CD8-positive, alpha-beta T cell (primary cell): ENCODE measurements at regions of chr6 and their contacts with region 1.

Region 1: GRCh38 chr6:144095331-144096002 is at the start of gene SF3B5:
- DNase-seq: peak; percentile 94 to 100 (median 97)
- ATAC-seq: peak; percentile 96
- H3K4me3 ChIP-seq: peak within 1 kb of the TSS; percentile 79 to 91
- H3K4me3 Mint-ChIP-seq: peak within 1 kb of the TSS; percentile 97
- H3K27ac ChIP-seq: peak within 1 kb of the TSS; percentile 91 to 94
- H3K27ac Mint-ChIP-seq: peak within 1 kb of the TSS; percentile 98
- H3K4me1 ChIP-seq: peaks cover 18% of the 10 kb centered on the region
- H3K4me1 Mint-ChIP-seq: peaks cover 25% of the 10 kb centered on the region
- H3K27me3 ChIP-seq: no peaks in the 10 kb centered on the region
- H3K27me3 Mint-ChIP-seq: no peaks in the 10 kb centered on the region
- CTCF ChIP-seq: no peak
- total RNA-seq, gene SF3B5: 167 to 171 TPM

Region 2: GRCh38 chr6:142155895-142156757 is 1939.3 kb before region 1 on chr6:
- CTCF ChIA-PET with region 1: no interaction called
- POLR2A ChIA-PET with region 1: no interaction called
- intact Hi-C with region 1: loop called in 1 of 2 experiments (anchors 10 kb)
- DNase-seq: peak in 2 of 9 experiments; percentile 19 to 44
- ATAC-seq: peak; percentile 76
- H3K4me3 ChIP-seq: no peak overlapping the region
- H3K4me3 Mint-ChIP-seq: no peak overlapping the region
- H3K27ac ChIP-seq: no peak overlapping the region
- H3K27ac Mint-ChIP-seq: peak overlapping the region; percentile 39
- H3K4me1 ChIP-seq: peaks cover 8% of the 10 kb centered on the region
- H3K4me1 Mint-ChIP-seq: peaks cover 69% of the 10 kb centered on the region
- H3K27me3 ChIP-seq: no peaks in the 10 kb centered on the region
- H3K27me3 Mint-ChIP-seq: no peaks in the 10 kb centered on the region
- CTCF ChIP-seq: peak; percentile 83

Region 3: DNA sequence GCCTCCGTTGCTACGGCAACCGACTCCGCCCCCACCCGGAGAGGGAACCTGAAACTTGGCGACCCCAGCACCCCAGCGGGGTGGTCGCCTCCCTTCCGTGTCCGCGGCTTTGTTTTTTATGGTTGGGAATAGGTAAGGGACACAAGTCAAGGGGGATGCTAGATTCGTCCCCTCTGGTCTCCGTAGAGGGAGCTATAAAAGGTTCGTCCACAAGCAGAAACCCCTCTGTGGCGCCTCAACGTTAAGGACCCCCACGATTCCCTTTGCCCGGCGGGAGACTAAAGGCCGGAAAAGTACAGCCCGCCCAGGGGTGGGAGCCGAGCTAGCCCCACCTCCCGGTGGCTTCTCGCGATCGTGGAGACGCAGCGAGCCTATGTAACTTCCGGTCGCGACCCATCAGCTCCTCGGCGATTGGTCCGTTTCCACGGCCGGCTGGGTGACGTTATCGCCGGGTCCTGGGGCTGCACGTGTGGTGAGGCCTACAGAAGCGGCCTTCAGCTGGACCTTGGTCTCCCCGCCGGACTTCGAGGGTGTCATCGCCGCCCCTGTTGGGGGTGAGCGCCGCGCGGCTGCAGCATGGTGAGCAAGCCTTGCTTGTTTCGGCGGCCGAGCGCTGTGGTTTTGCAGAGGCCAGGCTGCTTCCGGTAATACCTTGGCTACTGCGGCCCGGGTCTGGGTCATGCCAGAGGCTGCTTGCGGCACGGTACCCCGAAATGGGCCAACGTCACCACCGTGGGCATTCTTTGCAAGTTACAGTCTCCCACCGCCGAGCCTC is 252.4 kb before region 1 on chr6 and contains the start of gene LTV1:
- CTCF ChIA-PET with region 1: no interaction called
- POLR2A ChIA-PET with region 1: interaction called, 4 read pairs
- intact Hi-C with region 1: loop called (anchors 1 to 2 kb)
- DNase-seq: peak; percentile 82 to 96 (median 91)
- ATAC-seq: peak; percentile 96
- H3K4me3 ChIP-seq: peak within 1 kb of the TSS; percentile 96 to 99
- H3K4me3 Mint-ChIP-seq: peak within 1 kb of the TSS; percentile 96
- H3K27ac ChIP-seq: peak within 1 kb of the TSS; percentile 94 to 95
- H3K27ac Mint-ChIP-seq: peak within 1 kb of the TSS; percentile 98
- H3K4me1 ChIP-seq: peaks cover 6% of the 10 kb centered on the region
- H3K4me1 Mint-ChIP-seq: peaks cover 28% of the 10 kb centered on the region
- H3K27me3 ChIP-seq: no peaks in the 10 kb centered on the region
- H3K27me3 Mint-ChIP-seq: no peaks in the 10 kb centered on the region
- CTCF ChIP-seq: no peak
- total RNA-seq, gene LTV1: 31.7 to 33.4 TPM

Region 4: DNA sequence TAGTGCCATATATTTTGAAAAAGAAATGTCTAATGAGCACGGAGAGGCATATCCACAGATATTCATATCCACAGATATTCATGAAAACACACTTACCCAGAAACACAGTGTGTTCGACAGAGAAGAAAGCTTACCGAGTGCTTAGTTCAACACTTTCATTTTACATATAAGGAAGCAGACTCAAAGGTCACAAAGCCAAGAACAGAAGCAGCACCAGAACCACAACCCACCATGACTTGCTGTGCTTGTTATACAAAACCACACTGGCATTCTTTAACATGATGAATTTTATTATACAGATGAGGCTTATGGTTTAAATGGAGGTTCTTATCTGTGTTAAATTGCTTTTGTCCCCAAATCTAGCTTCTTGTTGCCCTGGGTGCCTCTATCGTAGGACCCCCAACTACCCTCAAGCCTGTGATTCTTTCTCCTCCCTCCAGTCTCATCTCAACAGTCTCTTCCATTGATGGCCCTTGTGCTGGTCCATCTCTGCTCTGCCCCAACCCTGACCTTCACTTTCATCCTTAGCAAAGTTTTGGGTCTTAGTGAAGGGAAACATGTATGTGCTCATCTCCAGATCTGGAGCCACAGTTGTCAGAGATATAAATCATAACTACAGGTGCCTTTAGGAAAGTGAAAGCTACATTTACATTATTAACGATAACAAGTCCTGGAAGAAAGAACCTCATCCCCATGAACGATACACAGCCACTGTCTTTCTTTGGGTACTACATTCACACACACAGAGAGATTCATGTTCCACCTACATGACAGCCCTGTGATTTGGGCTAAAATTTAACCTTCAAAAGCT is 40.1 kb before region 1 on chr6:
- CTCF ChIA-PET with region 1: interaction called, 3 read pairs
- POLR2A ChIA-PET with region 1: interaction called, 23 read pairs
- intact Hi-C with region 1: loop called in 1 of 2 experiments (anchors 2 kb)
- DNase-seq: peak in 6 of 9 experiments; percentile 30 to 84 (median 60)
- ATAC-seq: peak; percentile 98
- H3K4me3 ChIP-seq: peak overlapping the region; percentile 32 to 38
- H3K4me3 Mint-ChIP-seq: peak overlapping the region; percentile 82
- H3K27ac ChIP-seq: peak overlapping the region; percentile 32 to 80
- H3K27ac Mint-ChIP-seq: peak overlapping the region; percentile 94
- H3K4me1 ChIP-seq: peaks cover 20% of the 10 kb centered on the region
- H3K4me1 Mint-ChIP-seq: peaks cover 31% of the 10 kb centered on the region
- H3K27me3 ChIP-seq: no peaks in the 10 kb centered on the region
- H3K27me3 Mint-ChIP-seq: no peaks in the 10 kb centered on the region
- CTCF ChIP-seq: no peak

Region 5: DNA sequence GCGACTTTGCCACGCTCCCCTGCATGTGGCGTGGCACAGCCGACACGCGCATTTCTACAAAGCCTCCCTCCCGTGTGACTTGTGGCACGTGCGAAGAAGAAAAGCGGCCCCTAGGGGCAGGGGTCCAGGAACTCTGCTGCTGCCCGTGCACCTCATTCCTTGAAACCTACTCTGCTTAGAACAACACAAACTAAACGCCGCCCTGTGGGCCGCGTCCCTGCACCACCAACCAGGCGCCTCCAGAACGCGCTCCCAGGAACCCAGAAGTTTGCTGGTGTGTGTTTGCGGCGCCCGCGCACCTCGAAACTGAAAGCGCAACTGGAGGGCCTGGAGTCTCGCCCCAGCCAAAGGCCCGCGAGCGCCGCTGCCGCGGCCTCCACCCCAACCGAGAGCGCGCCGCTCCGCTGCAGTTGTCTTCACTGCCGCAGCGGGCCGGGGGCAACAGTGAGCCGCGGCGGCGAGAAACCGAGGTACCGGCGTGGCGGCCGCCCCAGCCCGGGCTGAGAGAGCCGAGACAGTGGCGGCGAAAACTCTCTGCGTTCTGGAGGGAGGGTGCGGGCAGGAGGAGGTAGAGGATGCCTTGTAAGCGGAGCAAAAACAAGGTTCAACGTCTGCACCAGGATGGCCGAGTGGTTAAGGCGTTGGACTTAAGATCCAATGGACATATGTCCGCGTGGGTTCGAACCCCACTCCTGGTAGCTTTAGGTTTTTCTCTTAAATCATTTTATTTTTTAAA is 120.6 kb after region 1 on chr6:
- CTCF ChIA-PET with region 1: interaction called, 22 read pairs
- POLR2A ChIA-PET with region 1: interaction called, 4 read pairs
- intact Hi-C with region 1: loop called (anchors 1 to 2 kb)
- DNase-seq: peak; percentile 85 to 97 (median 92)
- ATAC-seq: peak; percentile 85
- H3K4me3 ChIP-seq: peak overlapping the region; percentile 70 to 71
- H3K4me3 Mint-ChIP-seq: peak overlapping the region; percentile 95
- H3K27ac ChIP-seq: peak overlapping the region; percentile 82 to 86
- H3K27ac Mint-ChIP-seq: peak overlapping the region; percentile 100
- H3K4me1 ChIP-seq: peaks cover 27% of the 10 kb centered on the region
- H3K4me1 Mint-ChIP-seq: peaks cover 36% of the 10 kb centered on the region
- H3K27me3 ChIP-seq: no peaks in the 10 kb centered on the region
- H3K27me3 Mint-ChIP-seq: peaks cover 2% of the 10 kb centered on the region
- CTCF ChIP-seq: peak; percentile 64

Region 6: DNA sequence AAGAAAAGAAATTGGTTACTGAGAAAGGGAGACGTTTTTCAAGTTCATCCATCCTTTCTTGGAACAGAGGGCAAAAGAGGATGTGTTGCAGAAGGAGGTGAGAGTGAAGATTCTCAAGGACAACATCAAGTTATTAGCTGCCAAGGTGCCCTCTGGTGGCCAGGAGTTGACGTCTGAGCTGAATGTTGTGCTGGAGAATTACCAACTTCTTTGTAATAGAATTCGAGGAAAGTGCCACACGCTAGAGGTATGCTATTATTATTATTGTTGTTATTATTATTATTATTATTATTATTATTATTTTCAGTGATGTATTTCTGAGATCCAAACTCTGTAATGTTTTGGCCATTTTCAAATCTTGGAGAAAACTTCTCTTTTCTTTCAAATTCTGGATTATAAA is 386.7 kb after region 1 on chr6:
- CTCF ChIA-PET with region 1: interaction called, 10 read pairs
- POLR2A ChIA-PET with region 1: no interaction called
- intact Hi-C with region 1: no loop called
- DNase-seq: peak; percentile 49 to 80 (median 75)
- ATAC-seq: peak; percentile 77
- H3K4me3 ChIP-seq: no peak overlapping the region
- H3K4me3 Mint-ChIP-seq: no peak overlapping the region
- H3K27ac ChIP-seq: no peak overlapping the region
- H3K27ac Mint-ChIP-seq: no peak overlapping the region
- H3K4me1 ChIP-seq: no peaks in the 10 kb centered on the region
- H3K4me1 Mint-ChIP-seq: peaks cover 3% of the 10 kb centered on the region
- H3K27me3 ChIP-seq: no peaks in the 10 kb centered on the region
- H3K27me3 Mint-ChIP-seq: no peaks in the 10 kb centered on the region
- CTCF ChIP-seq: peak; percentile 80